Posterior vena cava (tissue), 2 donors: ENCODE measurements at regions of chr2 and their contacts with region 1.

Region 1: GRCh38 chr2:102050854-102051391 is 59.2 kb downstream of the IL1R2 start:
- DNase-seq: peak; percentile 95

Region 2: DNA sequence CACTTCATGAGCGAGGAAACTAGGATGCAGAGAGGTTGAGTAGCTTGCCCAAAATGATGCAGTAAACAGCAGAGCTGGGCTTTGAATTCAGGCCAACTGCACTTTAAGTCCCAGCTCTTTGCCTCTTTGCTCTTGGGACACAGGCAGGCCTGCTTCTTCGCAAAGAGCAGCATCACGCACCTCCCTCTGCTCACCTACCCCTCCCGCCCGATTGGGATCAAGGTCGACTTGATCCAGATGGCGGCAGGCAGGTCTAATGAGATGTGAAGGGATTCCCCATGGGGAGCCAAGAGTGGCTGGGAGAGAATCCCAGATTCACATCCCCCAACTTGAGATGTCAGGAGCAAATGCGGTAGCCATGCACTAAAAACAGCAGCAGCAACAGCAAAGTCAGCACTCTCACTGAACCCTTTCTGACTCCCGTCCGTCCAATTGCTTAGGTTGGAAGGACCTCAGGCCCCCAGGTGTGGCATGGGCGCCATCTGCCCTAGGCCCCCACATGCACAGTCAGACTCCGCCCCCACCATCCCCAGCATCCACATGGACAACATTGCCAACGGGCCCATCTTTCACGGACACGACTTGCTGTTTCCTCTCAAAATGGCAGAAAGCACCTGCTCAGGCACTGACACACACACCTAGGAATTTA is 437.7 kb before region 1 on chr2:
- intact Hi-C with region 1: no loop called
- DNase-seq: no peak

Region 3: GRCh38 chr2:101860157-101860556 is 190.8 kb before region 1 on chr2:
- intact Hi-C with region 1: no loop called
- DNase-seq: no peak

Region 4: DNA sequence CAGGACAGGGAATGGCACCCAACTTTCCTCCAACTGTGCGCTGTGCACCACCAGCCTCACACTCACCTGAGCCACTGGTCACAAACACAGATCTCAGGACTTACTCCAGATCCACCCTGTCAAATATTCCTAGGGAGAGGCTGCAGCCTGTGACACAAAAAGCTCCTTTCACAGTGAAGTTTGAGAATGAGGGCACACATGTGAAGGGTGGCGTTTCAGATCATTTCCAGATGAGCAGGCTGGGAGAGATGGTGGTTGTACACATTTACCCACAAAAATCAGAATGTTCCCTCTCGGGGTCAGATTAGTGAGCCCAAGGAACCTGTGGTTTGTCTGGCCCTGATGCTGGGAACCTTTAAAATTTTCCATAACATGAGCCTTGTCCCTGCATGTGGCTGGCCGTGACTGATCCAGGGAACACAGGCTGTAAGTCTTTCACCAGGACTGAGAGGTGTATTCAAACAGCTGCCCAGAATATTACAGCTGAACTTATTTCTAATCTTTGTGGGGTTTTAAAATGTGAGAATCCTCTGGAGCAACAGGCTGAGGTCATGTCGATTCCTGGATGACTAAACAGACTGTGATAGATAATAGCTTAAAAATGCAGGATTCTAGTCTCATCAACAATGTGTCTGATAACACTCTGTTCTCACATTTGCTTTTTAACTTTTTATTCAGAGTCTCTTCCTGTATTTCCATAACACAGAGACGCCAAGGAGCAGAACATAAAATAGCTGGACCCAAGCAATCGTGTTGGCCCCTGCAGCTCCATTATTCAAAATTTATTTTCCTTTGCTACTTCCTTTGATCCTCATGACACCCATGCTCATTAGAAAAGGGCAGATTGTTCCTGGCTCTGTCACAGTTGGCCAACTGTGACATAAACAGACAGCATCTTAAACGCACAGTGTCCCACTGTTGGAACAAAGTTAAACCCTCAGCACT is 23.6 kb before region 1 on chr2:
- intact Hi-C with region 1: loop called in 1 of 2 experiments (anchors 1 kb)
- DNase-seq: no peak

Region 5: DNA sequence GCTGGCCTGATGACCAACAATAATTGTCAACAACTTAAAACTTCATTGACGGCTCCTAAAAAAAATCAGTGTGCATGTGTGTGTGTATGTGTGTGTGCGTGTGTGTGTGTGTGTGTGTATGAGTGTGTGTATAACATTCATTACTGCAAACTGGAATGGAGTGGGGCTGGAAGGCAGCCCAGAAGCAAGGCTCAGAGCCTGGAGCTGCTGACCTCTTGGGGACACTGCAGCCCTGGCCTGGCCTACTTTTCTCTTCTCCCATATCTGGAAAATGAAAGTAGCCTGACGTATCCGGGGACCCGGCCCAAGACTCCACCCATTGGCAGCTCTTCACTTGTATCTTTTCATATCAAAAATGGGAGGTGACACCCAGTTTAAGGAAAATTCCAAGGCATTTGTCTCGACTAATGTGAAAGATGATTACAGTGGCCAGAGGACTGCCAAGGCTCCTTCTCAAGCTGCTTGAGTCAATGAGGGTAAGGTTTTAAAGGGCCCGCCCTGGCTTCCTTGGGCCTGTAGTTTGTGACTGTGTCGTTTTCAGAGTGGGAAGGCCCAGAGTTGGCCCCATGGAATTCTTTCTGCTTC is 19.2 kb after region 1 on chr2:
- intact Hi-C with region 1: no loop called
- DNase-seq: peak; percentile 97

Region 6: GRCh38 chr2:102141970-102142828 is 91.3 kb after region 1 on chr2 and contains the start of gene IL1R1:
- intact Hi-C with region 1: loop called in 1 of 2 experiments (anchors 10 kb)
- DNase-seq: peak; percentile 96
- total RNA-seq, gene IL1R1: 147 to 189 TPM

Region 7: GRCh38 chr2:102226612-102227391 is 175.9 kb after region 1 on chr2:
- intact Hi-C with region 1: no loop called
- DNase-seq: no peak